ENCODE measurements at regions of chr19 and their contacts with region 1.

Region 1: DNA sequence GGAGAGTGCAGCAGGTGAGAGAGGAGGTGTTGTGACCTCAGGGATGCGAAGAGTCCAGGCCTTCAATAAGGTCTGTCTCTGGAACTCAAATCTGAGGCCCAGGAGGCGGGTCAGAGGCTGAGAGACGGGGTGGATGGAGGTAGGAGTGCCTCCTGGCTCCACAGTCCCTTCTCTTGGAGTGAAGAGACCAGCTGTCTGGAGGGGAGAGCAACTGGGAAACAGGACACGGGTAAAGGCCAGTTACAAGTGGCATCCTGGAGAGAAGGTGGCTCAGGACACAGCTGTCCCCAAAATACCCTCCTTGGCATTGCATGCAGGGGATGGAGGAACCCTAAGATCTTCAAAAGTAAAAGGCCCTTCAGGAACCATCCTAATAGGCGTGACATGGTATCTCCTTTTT is 19.2 kb downstream of the PDE4A start:
- DNase-seq: no peak
- H3K4me3 ChIP-seq: no peak overlapping the region
- H3K27ac ChIP-seq: no peak overlapping the region
- H3K4me1 ChIP-seq: no peaks in the 10 kb centered on the region
- H3K27me3 ChIP-seq: no peaks in the 10 kb centered on the region
- CTCF ChIP-seq: no peak

Region 2: GRCh38 chr19:10461047-10461790 is 21.6 kb after region 1 on chr19:
- CTCF ChIA-PET with region 1: no interaction called
- POLR2A ChIA-PET with region 1: interaction called, 13 read pairs
- intact Hi-C with region 1: no loop called
- DNase-seq: peak; percentile 82 to 89
- H3K4me3 ChIP-seq: no peak overlapping the region
- H3K27ac ChIP-seq: no peak overlapping the region
- H3K4me1 ChIP-seq: peaks cover 5% of the 10 kb centered on the region
- H3K27me3 ChIP-seq: no peaks in the 10 kb centered on the region
- CTCF ChIP-seq: no peak